ENCODE measurements at regions of chr14 and their contacts with region 1.

Region 1: GRCh38 chr14:100271247-100271939 is 32.4 kb downstream of the YY1 start:
- DNase-seq: peak; percentile 71 to 78
- H3K4me3 ChIP-seq: no peak overlapping the region
- H3K27ac ChIP-seq: peak overlapping the region; percentile 42 to 58 (median 47)
- H3K4me1 ChIP-seq: peaks cover 37 to 46% of the 10 kb centered on the region in 2 donors
- H3K27me3 ChIP-seq: no peaks in the 10 kb centered on the region
- CTCF ChIP-seq: peak; percentile 31 to 78 (median 56)
- POLR2A ChIP-seq: no peak

Region 2: GRCh38 chr14:100306420-100307219 is 35.2 kb after region 1 on chr14 and contains the start of gene SLC25A29:
- intact Hi-C with region 1: loop called (anchors 5 kb)
- DNase-seq: peak; percentile 94 to 95
- H3K4me3 ChIP-seq: peak within 1 kb of the TSS; percentile 95 to 98 (median 97)
- H3K27ac ChIP-seq: peak within 1 kb of the TSS; percentile 90 to 97 (median 97)
- H3K4me1 ChIP-seq: peaks cover 65 to 66% of the 10 kb centered on the region in 2 donors
- H3K27me3 ChIP-seq: no peaks in the 10 kb centered on the region
- CTCF ChIP-seq: no peak
- POLR2A ChIP-seq: peak; percentile 95 to 98
- total RNA-seq, gene SLC25A29: 354 to 606 (median 433) TPM

Measured in thyroid gland (tissue), 4 donors.